Esophagus squamous epithelium (tissue), 5 donors: ENCODE measurements at regions of chr3 and their contacts with region 1.

Region 1: DNA sequence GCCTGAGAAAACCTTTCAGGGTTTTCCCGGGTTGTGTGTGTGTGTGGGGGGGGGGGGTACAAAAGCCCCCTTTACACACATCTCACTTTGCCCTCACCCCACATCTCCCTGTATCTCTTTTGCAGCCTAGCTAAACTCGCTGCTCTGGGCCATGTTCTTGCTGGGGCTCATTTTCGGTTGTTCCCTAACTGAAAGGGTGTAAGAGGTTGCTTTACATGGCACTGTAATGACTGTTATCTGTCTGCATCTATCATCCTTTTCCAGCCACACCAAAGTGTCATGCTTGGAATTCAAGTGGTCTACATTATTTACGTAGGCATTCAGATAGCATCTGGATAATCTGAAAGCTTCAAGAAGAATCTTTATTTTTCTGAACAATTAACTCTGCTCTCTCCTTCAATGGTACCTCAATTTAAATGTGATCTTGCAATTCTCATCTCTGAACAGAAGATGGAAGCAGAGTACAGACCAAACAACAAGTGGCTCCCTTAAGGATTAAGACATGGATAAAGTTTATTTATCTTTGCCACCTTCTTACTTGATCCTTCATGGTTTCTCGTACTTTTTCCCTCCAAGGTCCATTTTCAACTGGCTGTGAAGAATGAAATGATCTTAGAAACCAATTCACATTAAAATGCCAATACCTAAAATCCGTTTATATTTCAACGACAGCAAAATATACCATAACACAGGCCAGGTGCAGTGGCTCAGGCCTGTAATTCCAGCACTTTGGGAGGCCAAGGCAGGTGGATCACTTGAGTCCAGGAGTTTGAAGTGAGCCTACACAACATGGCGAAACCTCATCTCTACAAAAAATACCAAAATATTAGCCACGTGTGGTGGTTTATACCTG is 34.9 kb downstream of the DCLK3 start:
- DNase-seq: no peak
- H3K4me3 ChIP-seq: no peak overlapping the region
- H3K27ac ChIP-seq: no peak overlapping the region
- H3K4me1 ChIP-seq: no peaks in the 10 kb centered on the region
- H3K27me3 ChIP-seq: peaks cover 0 to 6% (median 0%) of the 10 kb centered on the region in 4 donors
- CTCF ChIP-seq: peak; percentile 23 to 75 (median 60)
- POLR2A ChIP-seq: no peak

Region 2: GRCh38 chr3:36868614-36869436 is 139.4 kb after region 1 on chr3:
- intact Hi-C with region 1: loop called (anchors 5 kb)
- DNase-seq: no peak
- H3K4me3 ChIP-seq: no peak overlapping the region
- H3K27ac ChIP-seq: no peak overlapping the region
- H3K4me1 ChIP-seq: no peaks in the 10 kb centered on the region
- H3K27me3 ChIP-seq: no peaks in the 10 kb centered on the region
- CTCF ChIP-seq: peak; percentile 55 to 76 (median 63)
- POLR2A ChIP-seq: no peak

Region 3: GRCh38 chr3:36957862-36958686 is 228.6 kb after region 1 on chr3:
- intact Hi-C with region 1: loop called (anchors 10 kb)
- DNase-seq: no peak
- H3K4me3 ChIP-seq: no peak overlapping the region
- H3K27ac ChIP-seq: no peak overlapping the region
- H3K4me1 ChIP-seq: peaks cover 0 to 9% (median 4%) of the 10 kb centered on the region in 3 donors
- H3K27me3 ChIP-seq: no peaks in the 10 kb centered on the region
- CTCF ChIP-seq: no peak
- POLR2A ChIP-seq: no peak

Region 4: GRCh38 chr3:37064747-37065146 is 335.3 kb after region 1 on chr3:
- intact Hi-C with region 1: no loop called
- DNase-seq: no peak
- H3K4me3 ChIP-seq: no peak overlapping the region
- H3K27ac ChIP-seq: no peak overlapping the region
- H3K4me1 ChIP-seq: no peaks in the 10 kb centered on the region
- H3K27me3 ChIP-seq: no peaks in the 10 kb centered on the region
- CTCF ChIP-seq: no peak
- POLR2A ChIP-seq: no peak